Naive thymus-derived CD8-positive, alpha-beta T cell (primary cell): ENCODE measurements at regions of chr16 and their contacts with region 1.

Region 1: DNA sequence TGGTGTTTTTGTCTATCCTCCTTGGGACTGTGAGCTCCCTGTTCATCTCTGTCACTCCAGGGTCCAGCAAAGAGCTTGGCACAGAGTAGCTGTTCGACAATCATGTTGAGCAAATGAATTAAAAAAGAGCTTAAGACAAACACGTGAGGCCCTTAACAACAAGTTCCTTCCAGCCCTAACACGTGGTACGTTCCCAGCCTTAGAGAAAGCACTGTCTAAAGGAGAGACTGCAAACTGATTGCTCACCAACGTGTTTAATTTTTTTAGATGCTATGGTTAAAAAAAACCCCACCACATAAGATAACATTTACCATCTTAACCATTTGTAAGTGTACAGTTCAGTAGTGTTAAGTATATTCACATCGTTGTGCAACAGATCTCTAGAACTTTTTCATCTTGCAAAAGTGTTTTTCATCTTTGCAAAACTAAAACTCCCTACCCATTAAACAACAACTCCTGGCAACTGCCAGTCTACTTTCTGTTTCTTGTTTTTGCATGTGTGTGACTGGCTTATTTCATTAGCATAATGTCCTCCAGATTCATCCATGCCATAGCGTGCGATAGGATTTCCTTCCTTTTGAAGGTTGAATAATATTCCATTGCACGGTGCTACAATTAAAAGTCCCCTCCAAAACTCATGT is 28.2 kb downstream of the LAT start:
- DNase-seq: peak in 7 of 10 donors; percentile 39 to 87 (median 70)
- ATAC-seq: peak; percentile 71 to 86
- H3K4me3 Mint-ChIP-seq: peak overlapping the region in 9 of 10 donors; percentile 54 to 80 (median 74)
- H3K27ac Mint-ChIP-seq: peak overlapping the region; percentile 95 to 99 (median 96)
- H3K4me1 Mint-ChIP-seq: peaks cover 28 to 69% (median 61%) of the 10 kb centered on the region in 4 donors
- H3K27me3 Mint-ChIP-seq: no peaks in the 10 kb centered on the region

Region 2: GRCh38 chr16:28964072-28964471 is 49.0 kb before region 1 on chr16:
- POLR2A ChIA-PET with region 1: no interaction called
- DNase-seq: no peak
- ATAC-seq: no peak
- H3K4me3 Mint-ChIP-seq: no peak overlapping the region
- H3K27ac Mint-ChIP-seq: peak overlapping the region in 1 of 10 donors; percentile 40
- H3K4me1 Mint-ChIP-seq: peaks cover 0 to 6% (median 0%) of the 10 kb centered on the region in 4 donors
- H3K27me3 Mint-ChIP-seq: no peaks in the 10 kb centered on the region

Region 3: GRCh38 chr16:29023279-29024277 is 10.5 kb after region 1 on chr16:
- POLR2A ChIA-PET with region 1: interaction called, 14 read pairs
- DNase-seq: peak in 5 of 10 donors; percentile 18 to 61 (median 50)
- ATAC-seq: peak; percentile 52 to 68
- H3K4me3 Mint-ChIP-seq: peak overlapping the region; percentile 31 to 86 (median 70)
- H3K27ac Mint-ChIP-seq: peak overlapping the region; percentile 90 to 98 (median 94)
- H3K4me1 Mint-ChIP-seq: peaks cover 26 to 70% (median 56%) of the 10 kb centered on the region in 4 donors
- H3K27me3 Mint-ChIP-seq: no peaks in the 10 kb centered on the region

Region 4: GRCh38 chr16:29029168-29029994 is 16.3 kb after region 1 on chr16:
- POLR2A ChIA-PET with region 1: interaction called, 13 read pairs
- DNase-seq: peak; percentile 22 to 80 (median 36)
- ATAC-seq: peak; percentile 79 to 90
- H3K4me3 Mint-ChIP-seq: peak overlapping the region in 7 of 10 donors; percentile 6 to 47 (median 34)
- H3K27ac Mint-ChIP-seq: peak overlapping the region; percentile 45 to 95 (median 79)
- H3K4me1 Mint-ChIP-seq: peaks cover 21 to 44% (median 38%) of the 10 kb centered on the region in 4 donors
- H3K27me3 Mint-ChIP-seq: no peaks in the 10 kb centered on the region